Psoas muscle (tissue), 8 donors: ENCODE measurements at regions of chr9 and their contacts with region 1.

Region 1: DNA sequence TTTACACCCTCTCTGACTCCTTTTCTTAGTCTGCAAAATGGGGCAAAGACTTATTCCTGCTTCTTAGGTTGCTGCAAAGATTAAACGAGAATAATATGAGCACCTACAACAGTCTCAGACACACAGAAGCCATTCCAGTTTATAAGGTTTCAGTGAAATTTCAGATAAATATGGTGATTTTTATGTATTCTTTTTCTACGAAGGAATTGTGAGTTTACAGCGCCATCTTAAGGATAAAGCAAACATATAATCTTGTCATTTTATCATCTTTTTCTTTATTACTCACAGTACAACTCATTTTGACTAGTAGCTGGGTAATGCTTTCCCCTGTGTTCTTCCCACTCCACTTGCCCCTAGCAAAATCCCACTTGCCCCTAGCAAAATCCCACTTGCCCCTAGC is 29.2 kb upstream of the SMC5 start:
- DNase-seq: no peak
- ATAC-seq: peak in 2 of 4 donors; percentile 41 to 78
- H3K4me3 ChIP-seq: peak overlapping the region; percentile 38
- H3K27ac ChIP-seq: no peak overlapping the region
- H3K4me1 ChIP-seq: peaks cover 24% of the 10 kb centered on the region
- H3K27me3 ChIP-seq: no peaks in the 10 kb centered on the region
- CTCF ChIP-seq: peak; percentile 47

Region 2: GRCh38 chr9:69971643-69972449 is 257.7 kb before region 1 on chr9:
- intact Hi-C with region 1: loop called (anchors 2 to 5 kb)
- DNase-seq: peak; percentile 71 to 86
- ATAC-seq: peak; percentile 74 to 92 (median 78)
- H3K4me3 ChIP-seq: no peak overlapping the region
- H3K27ac ChIP-seq: no peak overlapping the region
- H3K4me1 ChIP-seq: no peaks in the 10 kb centered on the region
- H3K27me3 ChIP-seq: no peaks in the 10 kb centered on the region
- CTCF ChIP-seq: peak; percentile 89

Region 3: DNA sequence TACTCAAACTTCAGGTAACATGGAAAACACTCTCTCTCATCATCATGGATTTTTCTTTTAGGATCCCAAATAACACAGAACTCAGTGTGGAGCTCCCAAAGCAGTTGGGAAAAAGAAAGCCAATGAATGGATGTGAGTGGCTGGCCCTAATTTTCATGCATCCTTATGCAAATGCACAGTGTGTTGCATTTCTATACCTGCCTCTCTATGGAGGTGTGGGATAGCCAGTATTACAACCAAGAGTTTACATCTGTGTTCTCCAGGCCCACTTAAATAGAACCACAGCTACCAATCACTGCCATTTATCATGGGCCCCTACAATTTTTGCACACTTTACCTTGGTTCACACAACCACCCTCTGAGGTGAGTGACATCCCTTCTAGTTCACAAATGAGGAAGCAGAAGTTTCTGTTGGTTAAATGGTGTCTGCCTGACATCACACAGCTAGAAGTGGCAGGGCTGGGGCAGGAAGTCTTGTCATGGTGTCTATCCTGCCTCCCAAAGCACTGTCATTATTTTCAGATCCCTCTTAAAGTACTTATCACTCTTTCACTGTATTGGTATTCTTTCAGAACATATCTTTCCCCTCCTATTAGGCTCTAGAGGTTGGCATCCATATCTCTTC is 168.6 kb before region 1 on chr9:
- intact Hi-C with region 1: no loop called
- DNase-seq: no peak
- ATAC-seq: no peak
- H3K4me3 ChIP-seq: no peak overlapping the region
- H3K27ac ChIP-seq: no peak overlapping the region
- H3K4me1 ChIP-seq: peaks cover 4% of the 10 kb centered on the region
- H3K27me3 ChIP-seq: no peaks in the 10 kb centered on the region
- CTCF ChIP-seq: no peak

Region 4: GRCh38 chr9:70079417-70080037 is 150.1 kb before region 1 on chr9:
- intact Hi-C with region 1: no loop called
- DNase-seq: no peak
- ATAC-seq: peak in 1 of 4 donors; percentile 47
- H3K4me3 ChIP-seq: no peak overlapping the region
- H3K27ac ChIP-seq: no peak overlapping the region
- H3K4me1 ChIP-seq: peaks cover 10% of the 10 kb centered on the region
- H3K27me3 ChIP-seq: no peaks in the 10 kb centered on the region
- CTCF ChIP-seq: no peak

Region 5: GRCh38 chr9:70111042-70111602 is 118.5 kb before region 1 on chr9:
- intact Hi-C with region 1: loop called in 1 of 2 experiments (anchors 5 kb)
- DNase-seq: peak; percentile 85 to 88
- ATAC-seq: peak; percentile 79 to 93 (median 86)
- H3K4me3 ChIP-seq: no peak overlapping the region
- H3K27ac ChIP-seq: no peak overlapping the region
- H3K4me1 ChIP-seq: peaks cover 5% of the 10 kb centered on the region
- H3K27me3 ChIP-seq: no peaks in the 10 kb centered on the region
- CTCF ChIP-seq: peak; percentile 91

Region 6: DNA sequence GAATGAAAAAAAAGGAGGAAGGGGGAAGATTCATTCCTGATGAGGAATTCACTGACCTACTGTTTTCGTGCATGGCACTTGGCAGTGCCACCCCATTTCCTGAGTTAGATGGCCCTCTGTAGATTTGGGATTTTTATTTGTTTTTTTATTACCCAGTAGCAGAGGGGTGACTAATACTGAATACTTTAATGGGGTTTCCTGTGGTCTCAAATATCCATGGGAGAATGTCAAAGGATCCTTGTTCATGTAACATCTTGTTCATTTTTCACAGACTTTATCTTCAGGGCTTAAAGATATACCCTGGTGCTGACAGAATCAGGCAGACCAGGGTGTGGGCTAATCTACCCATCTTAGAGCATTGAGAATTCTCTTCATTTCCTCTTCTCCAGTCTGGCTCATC is 92.9 kb before region 1 on chr9:
- intact Hi-C with region 1: loop called in 1 of 2 experiments (anchors 10 kb)
- DNase-seq: no peak
- ATAC-seq: no peak
- H3K4me3 ChIP-seq: no peak overlapping the region
- H3K27ac ChIP-seq: no peak overlapping the region
- H3K4me1 ChIP-seq: peaks cover 8% of the 10 kb centered on the region
- H3K27me3 ChIP-seq: no peaks in the 10 kb centered on the region
- CTCF ChIP-seq: no peak

Region 7: GRCh38 chr9:70285246-70285645 is 55.7 kb after region 1 on chr9:
- intact Hi-C with region 1: no loop called
- DNase-seq: no peak
- ATAC-seq: no peak
- H3K4me3 ChIP-seq: no peak overlapping the region
- H3K27ac ChIP-seq: no peak overlapping the region
- H3K4me1 ChIP-seq: no peaks in the 10 kb centered on the region
- H3K27me3 ChIP-seq: no peaks in the 10 kb centered on the region
- CTCF ChIP-seq: no peak

Region 8: DNA sequence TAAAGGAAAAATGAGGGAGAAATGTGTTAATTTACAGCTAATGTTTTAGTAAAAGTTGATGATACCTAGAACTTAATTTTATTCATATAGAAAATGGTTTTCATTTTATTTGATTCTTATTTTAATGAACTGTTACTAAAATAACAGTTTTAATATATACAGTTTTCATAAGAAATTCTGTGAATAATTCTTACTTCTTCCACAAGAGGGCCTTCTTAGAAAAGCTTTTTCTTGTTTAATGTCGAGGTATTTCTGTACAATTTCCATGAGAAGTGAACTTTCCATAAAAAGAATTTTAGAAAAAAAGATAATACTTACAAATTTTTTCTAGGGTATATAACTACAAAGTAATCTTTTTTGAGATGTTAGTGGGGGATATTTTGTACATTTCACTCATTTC is 111.0 kb after region 1 on chr9:
- intact Hi-C with region 1: no loop called
- DNase-seq: no peak
- ATAC-seq: no peak
- H3K4me3 ChIP-seq: no peak overlapping the region
- H3K27ac ChIP-seq: no peak overlapping the region
- H3K4me1 ChIP-seq: no peaks in the 10 kb centered on the region
- H3K27me3 ChIP-seq: no peaks in the 10 kb centered on the region
- CTCF ChIP-seq: peak; percentile 54